PC-3 (cell line): ENCODE measurements at regions of chr9 and their contacts with region 1.

Region 1: GRCh38 chr9:6106576-6107339 is 91.3 kb upstream of the RANBP6 start:
- DNase-seq: peak; percentile 60
- ATAC-seq: peak; percentile 66
- H3K4me3 ChIP-seq: peak overlapping the region; percentile 30; the same call in 1 of the 2 replicates
- H3K27ac ChIP-seq: peak overlapping the region; percentile 84
- H3K4me1 ChIP-seq: peaks cover 44% of the 10 kb centered on the region
- H3K27me3 ChIP-seq: no peaks in the 10 kb centered on the region
- CTCF ChIP-seq: peak; percentile 61

Region 2: GRCh38 chr9:6040077-6040476 is 66.7 kb before region 1 on chr9:
- CTCF ChIA-PET with region 1: no interaction called
- POLR2A ChIA-PET with region 1: no interaction called
- intact Hi-C with region 1: no loop called
- DNase-seq: no peak
- ATAC-seq: no peak
- H3K4me3 ChIP-seq: no peak overlapping the region
- H3K27ac ChIP-seq: no peak overlapping the region
- H3K4me1 ChIP-seq: no peaks in the 10 kb centered on the region
- H3K27me3 ChIP-seq: no peaks in the 10 kb centered on the region
- CTCF ChIP-seq: no peak

Region 3: GRCh38 chr9:6149315-6149714 is 42.6 kb after region 1 on chr9:
- CTCF ChIA-PET with region 1: no interaction called
- POLR2A ChIA-PET with region 1: no interaction called
- intact Hi-C with region 1: loop called (anchors 5 kb)
- DNase-seq: no peak
- ATAC-seq: no peak
- H3K4me3 ChIP-seq: no peak overlapping the region
- H3K27ac ChIP-seq: no peak overlapping the region
- H3K4me1 ChIP-seq: peaks cover 38% of the 10 kb centered on the region
- H3K27me3 ChIP-seq: no peaks in the 10 kb centered on the region
- CTCF ChIP-seq: no peak

Region 4: DNA sequence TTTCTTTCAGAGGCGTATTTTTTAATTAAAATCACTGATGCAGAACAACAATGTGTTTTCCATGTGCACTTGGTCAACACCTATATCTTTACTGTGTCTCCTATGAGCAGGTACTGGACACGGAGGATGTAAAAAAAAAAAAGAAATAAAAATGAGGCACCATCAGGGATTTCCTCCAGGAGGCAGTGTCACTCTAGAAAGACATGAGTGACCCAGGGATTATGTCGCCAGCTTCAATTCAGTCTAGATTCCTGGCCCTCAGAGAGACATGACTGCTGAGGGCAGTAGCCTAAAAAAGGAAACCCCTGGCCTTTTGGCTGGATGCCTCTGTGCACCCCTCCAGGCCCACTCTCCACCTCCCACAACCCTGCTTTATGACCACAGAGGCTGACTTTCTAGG is 90.6 kb after region 1 on chr9:
- CTCF ChIA-PET with region 1: no interaction called
- POLR2A ChIA-PET with region 1: no interaction called
- intact Hi-C with region 1: loop called (anchors 10 kb)
- DNase-seq: peak; percentile 50
- ATAC-seq: no peak
- H3K4me3 ChIP-seq: no peak overlapping the region
- H3K27ac ChIP-seq: peak overlapping the region; percentile 96
- H3K4me1 ChIP-seq: peaks cover 53% of the 10 kb centered on the region
- H3K27me3 ChIP-seq: no peaks in the 10 kb centered on the region
- CTCF ChIP-seq: peak; percentile 53

Region 5: DNA sequence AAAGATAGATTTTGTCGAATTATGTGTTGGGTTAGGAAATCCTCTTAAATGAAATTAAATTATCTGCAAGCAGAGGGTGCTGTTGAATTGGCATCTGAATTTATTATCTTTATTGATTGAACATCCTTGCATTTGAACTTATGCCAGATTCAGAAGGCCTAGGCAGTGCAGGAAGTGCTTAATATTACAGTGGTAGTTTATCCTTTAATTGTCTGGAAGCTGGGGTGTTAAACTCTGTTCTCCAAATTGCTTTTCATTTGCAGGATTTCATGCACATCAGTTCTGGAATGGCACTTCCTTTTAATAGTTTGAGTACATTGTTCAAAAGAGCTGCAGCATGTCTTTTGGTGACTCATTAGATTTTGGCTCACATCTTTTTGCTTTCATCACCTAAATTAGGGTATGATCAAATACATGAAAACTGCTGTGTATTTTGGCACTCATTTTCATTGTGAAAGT is 837.4 kb after region 1 on chr9:
- CTCF ChIA-PET with region 1: no interaction called
- POLR2A ChIA-PET with region 1: no interaction called
- intact Hi-C with region 1: no loop called
- DNase-seq: peak; percentile 79
- ATAC-seq: peak; percentile 80
- H3K4me3 ChIP-seq: no peak overlapping the region
- H3K27ac ChIP-seq: peak overlapping the region; percentile 79
- H3K4me1 ChIP-seq: peaks cover 29% of the 10 kb centered on the region
- H3K27me3 ChIP-seq: no peaks in the 10 kb centered on the region
- CTCF ChIP-seq: peak; percentile 51

Region 6: DNA sequence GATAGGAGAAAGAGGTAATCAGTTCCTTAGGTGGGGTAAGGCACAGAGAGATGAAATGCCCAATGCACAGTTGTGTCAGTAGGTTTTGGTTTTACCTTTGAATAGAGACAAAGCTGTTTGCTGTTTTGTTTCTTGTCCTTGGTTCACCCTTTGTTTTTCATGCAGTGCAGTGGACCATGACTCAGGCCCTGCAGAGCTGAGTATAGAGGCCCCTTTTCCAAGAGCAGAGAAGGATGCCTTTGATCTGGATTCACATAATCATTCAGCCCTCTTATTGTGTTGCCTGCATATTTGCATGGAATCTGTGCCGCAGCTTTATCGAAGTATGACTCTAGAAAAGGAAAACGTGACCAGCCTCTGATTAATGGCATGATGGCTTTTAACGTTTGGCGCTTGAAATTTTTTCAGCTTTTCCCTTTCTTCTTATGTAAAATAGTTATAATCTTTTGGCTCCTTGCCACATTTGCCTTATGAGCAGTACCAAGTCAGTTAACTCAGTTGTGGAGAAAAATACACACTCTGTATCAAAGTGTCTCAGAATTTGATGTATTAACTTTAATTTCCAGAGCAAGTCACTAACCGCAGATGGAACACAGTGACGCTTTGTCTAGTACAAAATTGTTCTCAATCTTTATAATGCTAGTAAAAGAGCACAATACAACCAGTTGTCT is 848.6 kb after region 1 on chr9:
- CTCF ChIA-PET with region 1: no interaction called
- POLR2A ChIA-PET with region 1: no interaction called
- intact Hi-C with region 1: no loop called
- DNase-seq: no peak
- ATAC-seq: no peak
- H3K4me3 ChIP-seq: no peak overlapping the region
- H3K27ac ChIP-seq: no peak overlapping the region
- H3K4me1 ChIP-seq: no peaks in the 10 kb centered on the region
- H3K27me3 ChIP-seq: no peaks in the 10 kb centered on the region
- CTCF ChIP-seq: no peak